ENCODE measurements at regions of chr3 and their contacts with region 1.

Region 1: GRCh38 chr3:107235928-107236315 is 141.3 kb upstream of the CCDC54 start:
- DNase-seq: peak; percentile 88
- H3K4me3 Mint-ChIP-seq: peak overlapping the region; percentile 71
- H3K27ac Mint-ChIP-seq: no peak overlapping the region
- H3K4me1 Mint-ChIP-seq: peaks cover 11% of the 10 kb centered on the region
- H3K27me3 Mint-ChIP-seq: peaks cover 17% of the 10 kb centered on the region

Region 2: DNA sequence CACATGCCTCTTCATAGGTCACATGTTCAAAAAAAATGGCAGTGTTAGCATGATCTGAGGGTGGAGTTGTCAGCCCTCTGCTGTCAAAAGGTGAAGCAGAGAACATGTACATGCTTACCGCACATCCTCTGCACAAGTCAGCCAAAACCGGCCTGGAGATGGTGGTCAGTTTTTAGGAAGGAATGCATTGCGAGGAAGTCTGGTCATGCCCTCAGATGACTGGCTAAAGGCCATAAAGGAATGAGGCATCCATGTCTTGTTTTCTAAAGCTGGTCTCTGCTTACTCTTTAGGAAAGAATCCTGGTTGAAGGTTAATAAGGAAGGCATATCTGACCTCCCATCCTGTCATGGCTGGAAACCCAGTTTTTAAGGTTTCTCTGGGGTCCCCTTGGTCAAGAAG is 150.7 kb before region 1 on chr3:
- intact Hi-C with region 1: no loop called
- DNase-seq: no peak
- H3K4me3 Mint-ChIP-seq: no peak overlapping the region
- H3K27ac Mint-ChIP-seq: no peak overlapping the region
- H3K4me1 Mint-ChIP-seq: no peaks in the 10 kb centered on the region
- H3K27me3 Mint-ChIP-seq: no peaks in the 10 kb centered on the region

Region 3: DNA sequence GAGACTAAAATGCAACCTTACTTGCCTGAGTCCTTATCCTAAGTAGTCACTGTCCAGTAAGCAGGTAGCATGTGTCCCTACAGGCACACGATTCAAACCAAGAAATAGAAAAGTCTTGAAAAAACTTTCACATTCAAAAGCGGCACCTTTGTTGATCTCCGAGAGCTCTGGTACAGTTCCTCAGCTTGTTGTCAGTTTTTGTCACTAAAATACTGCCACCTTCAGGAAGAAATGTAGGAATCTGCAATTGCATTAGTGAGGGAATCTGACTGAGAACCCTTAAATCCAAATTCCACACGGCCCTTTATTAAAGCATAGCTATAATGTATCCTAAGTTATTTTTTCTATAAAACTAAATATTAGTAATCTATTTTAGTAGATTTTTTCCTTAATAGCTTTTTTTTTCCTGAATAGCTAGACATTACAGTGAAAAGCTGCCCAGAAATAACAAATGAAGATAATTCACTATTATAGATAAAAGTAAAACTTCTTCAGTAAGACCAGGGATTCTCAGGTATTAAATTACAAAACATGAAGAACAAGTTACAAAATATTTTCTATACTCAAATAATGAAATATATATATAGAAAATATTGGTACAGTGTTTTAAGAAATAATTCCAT is 185.4 kb after region 1 on chr3:
- intact Hi-C with region 1: loop called (anchors 1 kb)
- DNase-seq: peak; percentile 78
- H3K4me3 Mint-ChIP-seq: peak overlapping the region; percentile 50
- H3K27ac Mint-ChIP-seq: no peak overlapping the region
- H3K4me1 Mint-ChIP-seq: peaks cover 2% of the 10 kb centered on the region
- H3K27me3 Mint-ChIP-seq: peaks cover 37% of the 10 kb centered on the region

Region 4: DNA sequence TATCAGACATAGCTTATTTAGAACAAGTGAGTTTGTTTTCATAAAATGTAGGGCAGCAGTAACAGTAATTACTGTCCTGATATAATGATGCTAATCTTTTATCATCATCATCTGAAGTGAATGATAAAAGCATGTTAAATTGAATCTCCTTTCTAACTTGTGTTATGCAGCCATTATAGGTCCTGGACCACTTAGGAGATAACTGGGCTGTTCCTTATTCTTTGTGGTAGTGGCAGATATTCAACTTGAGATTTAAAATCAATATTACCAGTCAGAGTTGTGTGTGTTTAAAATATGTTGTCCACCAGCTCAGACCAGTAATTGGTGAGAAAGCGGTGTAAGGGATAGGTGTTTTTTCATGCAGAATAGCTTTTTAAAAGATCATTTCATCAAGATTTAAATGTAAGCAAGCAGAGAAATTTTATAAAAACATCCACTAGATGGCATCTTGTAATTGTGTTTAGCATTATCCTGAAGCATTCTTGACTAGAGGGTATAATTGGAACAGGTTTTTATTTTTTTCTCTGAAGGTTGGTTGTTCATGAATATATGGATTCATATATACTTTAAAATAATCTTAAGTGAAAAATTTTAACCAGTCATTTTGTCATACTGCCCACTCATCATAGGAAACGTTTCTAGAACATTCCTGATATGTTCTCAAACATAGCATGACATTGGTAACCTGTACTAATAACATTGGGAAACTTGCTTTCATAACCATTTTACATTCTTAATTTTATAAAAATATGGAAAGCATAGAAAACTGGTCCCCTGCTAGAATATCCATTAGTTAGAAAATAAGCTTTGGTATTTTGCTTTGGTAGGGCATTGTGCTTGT is 440.8 kb after region 1 on chr3:
- intact Hi-C with region 1: loop called (anchors 10 kb)
- DNase-seq: no peak
- H3K4me3 Mint-ChIP-seq: no peak overlapping the region
- H3K27ac Mint-ChIP-seq: no peak overlapping the region
- H3K4me1 Mint-ChIP-seq: peaks cover 19% of the 10 kb centered on the region
- H3K27me3 Mint-ChIP-seq: no peaks in the 10 kb centered on the region

Region 5: GRCh38 chr3:107846279-107846852 is 610.4 kb after region 1 on chr3:
- intact Hi-C with region 1: loop called (anchors 5 kb)
- DNase-seq: peak; percentile 69
- H3K4me3 Mint-ChIP-seq: no peak overlapping the region
- H3K27ac Mint-ChIP-seq: no peak overlapping the region
- H3K4me1 Mint-ChIP-seq: no peaks in the 10 kb centered on the region
- H3K27me3 Mint-ChIP-seq: peaks cover 13% of the 10 kb centered on the region

Region 6: DNA sequence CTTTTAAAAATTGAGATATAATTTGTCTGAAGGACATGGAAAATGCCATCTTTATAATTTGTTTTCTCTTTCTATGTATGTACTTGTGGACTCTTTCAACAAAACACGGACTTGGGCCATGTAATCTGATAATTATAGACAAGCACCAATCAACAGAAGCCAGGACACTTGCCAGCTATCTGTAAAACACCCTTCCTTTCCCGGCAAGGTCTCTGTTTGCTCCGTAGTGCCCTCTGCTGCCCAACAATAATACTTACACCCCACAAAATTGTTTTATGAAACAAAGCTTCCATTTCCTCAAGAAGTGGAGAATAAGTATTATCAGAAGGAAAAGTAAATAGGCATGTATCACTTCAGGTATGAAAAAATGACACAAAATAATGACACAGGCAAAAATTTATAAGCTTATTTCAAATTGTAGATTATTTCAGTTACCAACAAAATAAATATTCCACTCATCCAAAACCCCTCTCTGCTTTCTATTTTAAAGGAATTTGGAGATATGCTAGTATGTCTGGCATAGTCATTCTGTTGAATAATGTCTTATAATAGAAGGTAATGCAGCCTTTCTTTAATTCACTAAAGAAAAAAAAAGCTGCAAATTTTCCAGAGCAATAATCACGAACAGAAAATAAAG is 1241.7 kb after region 1 on chr3:
- intact Hi-C with region 1: loop called (anchors 2 kb)
- DNase-seq: peak; percentile 86
- H3K4me3 Mint-ChIP-seq: no peak overlapping the region
- H3K27ac Mint-ChIP-seq: no peak overlapping the region
- H3K4me1 Mint-ChIP-seq: peaks cover 3% of the 10 kb centered on the region
- H3K27me3 Mint-ChIP-seq: peaks cover 10% of the 10 kb centered on the region

Measured in activated CD4-positive, alpha-beta T cell treated with anti-CD3 and anti-CD28 coated beads, Interleukin-2, amount 10 ng/mL, durations not matched to agents 24 days and 14 days (primary cell).